HCT116 (cell line): ENCODE measurements at regions of chr10 and their contacts with region 1.

Region 1: DNA sequence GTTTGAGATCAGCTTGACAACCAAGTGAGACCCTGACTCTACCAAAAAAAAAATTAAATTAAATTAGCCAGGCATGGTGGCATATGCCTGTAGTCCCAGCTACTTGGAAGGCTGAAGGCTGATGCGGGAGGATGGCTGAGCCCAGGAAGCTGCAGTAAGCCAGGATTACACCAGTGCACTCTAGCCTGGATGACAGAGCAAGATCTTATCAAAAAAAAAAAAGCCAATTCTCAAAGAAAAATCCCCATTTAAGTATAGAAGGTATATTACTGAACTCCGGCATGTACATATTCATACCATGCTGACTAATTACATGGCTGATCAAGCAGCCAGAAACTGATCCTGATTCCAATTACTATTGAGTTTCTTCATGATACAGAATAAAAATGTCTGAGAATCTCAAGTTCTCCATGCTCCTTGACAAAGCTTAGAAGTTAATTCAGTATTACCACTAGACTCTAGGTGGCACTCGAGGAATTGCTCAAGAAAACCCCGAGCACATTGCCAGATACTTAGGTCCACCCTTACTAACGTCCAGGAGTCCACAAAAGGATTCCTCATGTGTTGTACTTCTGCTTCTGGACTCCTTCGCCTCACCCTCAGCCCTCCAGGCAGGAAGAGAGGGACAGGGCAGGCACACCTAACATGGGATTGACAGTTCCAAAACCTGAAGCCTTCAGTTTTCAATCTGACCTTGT is 148.9 kb downstream of the PARD3 start:
- DNase-seq: peak; percentile 77
- ATAC-seq: peak; percentile 86
- H3K4me3 ChIP-seq: no peak overlapping the region
- H3K27ac ChIP-seq: no peak overlapping the region
- H3K4me1 ChIP-seq: peaks cover 15 to 17% of the 10 kb centered on the region in 2 experiments
- H3K27me3 ChIP-seq: no peaks in the 10 kb centered on the region
- CTCF ChIP-seq: peak; percentile 57 to 73 (median 71)
- POLR2A ChIP-seq: no peak
- RAD21 ChIP-seq: peak; percentile 87

Region 2: GRCh38 chr10:33841678-33842077 is 824.5 kb before region 1 on chr10:
- CTCF ChIA-PET with region 1: no interaction called
- POLR2A ChIA-PET with region 1: no interaction called
- RAD21 ChIA-PET with region 1: no interaction called
- intact Hi-C with region 1: no loop called
- DNase-seq: no peak
- ATAC-seq: no peak
- H3K4me3 ChIP-seq: no peak overlapping the region
- H3K27ac ChIP-seq: no peak overlapping the region
- H3K4me1 ChIP-seq: no peaks in the 10 kb centered on the region
- H3K27me3 ChIP-seq: no peaks in the 10 kb centered on the region
- CTCF ChIP-seq: no peak
- POLR2A ChIP-seq: no peak
- RAD21 ChIP-seq: no peak

Region 3: GRCh38 chr10:34824870-34825269 is 158.7 kb after region 1 on chr10:
- CTCF ChIA-PET with region 1: interaction called, 4 read pairs
- POLR2A ChIA-PET with region 1: no interaction called
- RAD21 ChIA-PET with region 1: interaction called in 1 of 2 experiments, 3 read pairs
- intact Hi-C with region 1: loop called (anchors 5 kb)
- DNase-seq: no peak
- ATAC-seq: peak; percentile 57
- H3K4me3 ChIP-seq: no peak overlapping the region
- H3K27ac ChIP-seq: no peak overlapping the region
- H3K4me1 ChIP-seq: peaks cover 16 to 24% of the 10 kb centered on the region in 2 experiments
- H3K27me3 ChIP-seq: no peaks in the 10 kb centered on the region
- CTCF ChIP-seq: peak; percentile 40 to 52 (median 42)
- POLR2A ChIP-seq: no peak
- RAD21 ChIP-seq: peak; percentile 63

Region 4: DNA sequence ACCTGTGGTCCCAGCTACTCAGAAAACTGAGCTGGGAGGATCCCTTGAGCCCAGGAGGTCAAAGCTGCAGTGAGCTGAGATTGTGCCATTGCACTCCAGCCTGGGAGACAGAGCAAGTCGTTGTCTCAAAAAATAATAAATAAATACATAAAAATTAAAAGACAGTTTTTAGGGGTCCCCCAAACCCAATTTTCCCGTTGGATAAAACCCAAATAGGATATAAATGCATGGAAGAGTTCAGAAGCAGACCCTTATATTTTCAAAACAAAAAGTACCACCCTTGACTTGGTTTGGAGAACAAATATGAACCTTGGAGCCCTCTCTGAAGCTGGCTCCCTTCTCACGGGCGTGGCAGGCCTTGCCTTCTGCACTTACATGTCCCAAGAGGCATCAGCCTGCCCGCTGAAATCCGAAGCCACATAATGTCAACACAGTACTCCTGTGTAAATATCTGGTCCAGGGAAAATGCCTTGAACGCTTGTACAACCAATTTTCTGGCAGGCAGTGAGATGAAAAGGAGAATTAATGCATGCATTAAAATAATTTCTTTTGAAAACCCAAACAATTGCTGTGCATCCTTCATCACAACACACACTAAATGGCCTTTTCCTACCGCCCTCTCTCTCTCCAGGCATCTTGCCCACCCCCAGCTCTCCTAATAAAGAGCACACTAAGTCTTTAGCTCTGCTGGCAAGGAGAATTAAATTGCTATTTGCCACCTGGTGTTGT is 195.3 kb after region 1 on chr10:
- CTCF ChIA-PET with region 1: no interaction called
- POLR2A ChIA-PET with region 1: no interaction called
- RAD21 ChIA-PET with region 1: no interaction called
- intact Hi-C with region 1: no loop called
- DNase-seq: no peak
- ATAC-seq: no peak
- H3K4me3 ChIP-seq: no peak overlapping the region
- H3K27ac ChIP-seq: no peak overlapping the region
- H3K4me1 ChIP-seq: peaks cover 2 to 5% of the 10 kb centered on the region in 2 experiments; a peak in 2 of 4 replicates
- H3K27me3 ChIP-seq: no peaks in the 10 kb centered on the region
- CTCF ChIP-seq: no peak
- POLR2A ChIP-seq: no peak
- RAD21 ChIP-seq: no peak

Region 5: GRCh38 chr10:35027567-35027966 is 361.4 kb after region 1 on chr10:
- CTCF ChIA-PET with region 1: interaction called, 3 read pairs
- POLR2A ChIA-PET with region 1: no interaction called
- RAD21 ChIA-PET with region 1: no interaction called
- intact Hi-C with region 1: loop called (anchors 1 kb)
- DNase-seq: no peak
- ATAC-seq: no peak
- H3K4me3 ChIP-seq: no peak overlapping the region
- H3K27ac ChIP-seq: no peak overlapping the region
- H3K4me1 ChIP-seq: no peaks in the 10 kb centered on the region
- H3K27me3 ChIP-seq: no peaks in the 10 kb centered on the region
- CTCF ChIP-seq: peak; percentile 24 to 54 (median 25); a peak in 4 of 6 replicates
- POLR2A ChIP-seq: no peak
- RAD21 ChIP-seq: peak; percentile 29; the same call in 1 of the 2 replicates